ENCODE measurements at regions of chr7 and their contacts with region 1.

Region 1: DNA sequence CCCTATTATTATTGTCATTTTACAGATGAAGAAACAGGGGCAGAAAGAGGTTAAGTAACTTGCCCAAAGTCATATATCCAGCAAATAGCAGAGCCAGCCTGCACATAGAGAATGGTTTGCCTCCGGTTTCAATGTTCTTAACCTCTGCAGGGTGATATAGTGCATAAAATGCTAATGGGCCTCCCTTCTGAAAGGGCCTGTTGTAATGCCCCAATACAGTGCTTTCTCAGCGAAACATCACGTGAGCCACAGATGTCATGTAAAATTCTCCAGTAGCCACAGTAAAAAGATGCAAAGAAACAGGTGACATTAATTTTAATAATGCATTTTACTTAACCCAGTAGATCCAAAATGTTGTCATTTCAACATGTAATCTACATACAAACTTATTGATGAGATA is 38.1 kb downstream of the LRGUK start:
- DNase-seq: no peak
- H3K4me3 ChIP-seq: no peak overlapping the region
- H3K27ac ChIP-seq: no peak overlapping the region
- H3K4me1 ChIP-seq: no peaks in the 10 kb centered on the region
- H3K27me3 ChIP-seq: no peaks in the 10 kb centered on the region
- CTCF ChIP-seq: no peak
- EP300 ChIP-seq: no peak
- POLR2A ChIP-seq: no peak

Region 2: DNA sequence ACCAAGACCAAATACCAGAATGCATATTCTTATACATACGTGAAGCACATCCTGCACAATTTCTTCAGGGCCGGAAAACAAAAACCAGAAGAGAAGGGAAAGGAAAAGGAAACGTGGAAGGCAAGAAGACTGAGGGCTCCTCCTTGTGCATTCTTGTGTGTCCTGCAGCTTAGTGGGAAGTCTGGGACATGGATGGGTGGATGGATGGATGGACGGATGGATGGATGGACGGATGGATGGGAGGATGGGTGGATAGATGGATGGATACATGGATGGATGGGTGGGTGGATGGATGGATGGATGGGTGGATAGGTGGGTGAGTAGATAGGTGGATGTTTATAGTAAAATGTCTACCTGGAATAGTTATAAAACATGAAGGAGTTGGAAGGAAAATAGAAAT is 182.3 kb after region 1 on chr7:
- intact Hi-C with region 1: loop called (anchors 10 kb)
- DNase-seq: no peak
- H3K4me3 ChIP-seq: no peak overlapping the region
- H3K27ac ChIP-seq: no peak overlapping the region
- H3K4me1 ChIP-seq: no peaks in the 10 kb centered on the region
- H3K27me3 ChIP-seq: peaks cover 0 to 3% (median 0%) of the 10 kb centered on the region in 3 donors
- CTCF ChIP-seq: no peak
- EP300 ChIP-seq: no peak
- POLR2A ChIP-seq: no peak

Region 3: DNA sequence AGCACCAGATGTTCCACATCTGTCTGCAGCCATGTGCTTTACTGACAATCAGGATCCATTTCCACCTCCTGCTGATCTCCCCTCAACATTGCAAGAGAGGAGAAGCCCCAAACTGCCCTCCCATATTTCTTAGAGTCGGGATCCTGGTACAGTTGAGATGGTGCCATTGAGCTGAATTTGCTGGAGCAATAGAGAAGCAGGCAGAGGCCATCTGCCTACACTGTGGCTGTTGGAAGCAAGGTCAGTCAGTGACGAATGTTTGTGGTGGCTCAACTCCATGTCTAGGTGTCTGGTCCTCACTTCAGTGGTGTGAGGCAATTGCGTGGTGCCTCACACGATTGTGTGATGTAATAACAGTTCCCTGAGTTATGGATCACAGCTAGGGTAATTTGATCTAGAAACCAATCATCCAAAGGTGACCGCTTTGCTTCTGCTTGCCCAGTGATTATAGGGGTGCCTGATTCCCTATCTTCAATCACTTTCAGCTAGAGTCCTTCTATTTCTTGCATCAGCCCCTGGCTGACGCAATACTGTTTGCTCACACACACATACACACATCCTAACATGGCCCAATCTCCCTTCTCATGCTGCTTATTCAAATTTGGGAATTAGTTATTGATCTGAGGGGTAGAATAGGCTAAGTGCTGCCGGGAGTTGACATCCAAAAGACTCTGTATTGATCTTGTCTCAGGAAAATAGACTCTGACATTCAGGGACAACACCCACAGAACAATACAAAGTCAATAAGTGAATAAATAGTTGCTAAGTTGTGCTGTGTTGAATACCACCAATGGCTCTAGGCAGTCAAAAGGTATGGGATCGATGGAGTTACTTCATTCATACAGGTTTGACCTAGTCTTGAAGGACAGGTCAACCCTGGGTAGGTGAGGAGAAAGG is 197.6 kb after region 1 on chr7:
- intact Hi-C with region 1: no loop called
- DNase-seq: no peak
- H3K4me3 ChIP-seq: no peak overlapping the region
- H3K27ac ChIP-seq: no peak overlapping the region
- H3K4me1 ChIP-seq: no peaks in the 10 kb centered on the region
- H3K27me3 ChIP-seq: no peaks in the 10 kb centered on the region
- CTCF ChIP-seq: no peak
- EP300 ChIP-seq: no peak
- POLR2A ChIP-seq: no peak